T-cell (primary cell): ENCODE measurements at regions of chr1 and their contacts with region 1.

Region 1: DNA sequence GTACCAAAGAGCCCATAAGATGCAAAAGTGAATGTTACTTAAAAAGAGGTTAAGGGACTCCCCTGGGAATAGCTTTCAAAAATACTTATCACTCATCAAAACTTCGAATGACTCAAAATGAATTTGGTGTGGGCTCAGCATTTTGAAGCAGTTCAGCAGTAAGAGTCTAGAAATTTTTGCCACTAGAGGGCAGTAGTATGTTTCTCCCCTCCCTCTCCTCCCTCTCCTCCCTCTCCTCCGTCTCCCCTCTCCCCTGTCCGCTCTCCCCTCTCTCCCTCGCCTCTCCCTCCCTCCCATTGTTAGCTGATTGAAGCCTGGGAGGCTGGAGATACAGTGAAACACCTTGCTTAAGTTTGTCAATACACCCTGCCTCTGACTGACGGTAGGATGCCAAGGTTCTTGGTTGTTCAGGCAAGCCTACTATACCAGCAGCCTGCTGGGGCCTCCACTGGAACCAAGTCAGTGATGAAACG is 70.8 kb upstream of the TENT5C start:
- DNase-seq: peak in 27 of 35 experiments; percentile 0 to 80 (median 23)
- ATAC-seq: peak; percentile 73 to 86 (median 77)
- H3K4me3 ChIP-seq: no peak overlapping the region
- H3K4me3 Mint-ChIP-seq: no peak overlapping the region
- H3K27ac ChIP-seq: no peak overlapping the region
- H3K27ac Mint-ChIP-seq: peak overlapping the region; percentile 24 to 46
- H3K4me1 ChIP-seq: peaks cover 2 to 10% of the 10 kb centered on the region in 2 experiments
- H3K4me1 Mint-ChIP-seq: peaks cover 0 to 2% (median 0%) of the 10 kb centered on the region in 3 donors
- H3K27me3 ChIP-seq: no peaks in the 10 kb centered on the region
- H3K27me3 Mint-ChIP-seq: no peaks in the 10 kb centered on the region

Region 2: GRCh38 chr1:117473063-117473462 is 62.0 kb before region 1 on chr1:
- CTCF ChIA-PET with region 1: no interaction called
- POLR2A ChIA-PET with region 1: no interaction called
- DNase-seq: no peak
- ATAC-seq: no peak
- H3K4me3 ChIP-seq: no peak overlapping the region
- H3K4me3 Mint-ChIP-seq: no peak overlapping the region
- H3K27ac ChIP-seq: no peak overlapping the region
- H3K27ac Mint-ChIP-seq: no peak overlapping the region
- H3K4me1 ChIP-seq: no peaks in the 10 kb centered on the region
- H3K4me1 Mint-ChIP-seq: no peaks in the 10 kb centered on the region
- H3K27me3 ChIP-seq: no peaks in the 10 kb centered on the region
- H3K27me3 Mint-ChIP-seq: no peaks in the 10 kb centered on the region

Region 3: GRCh38 chr1:117579221-117579906 is 44.3 kb after region 1 on chr1:
- CTCF ChIA-PET with region 1: interaction called in 1 of 2 experiments, 11 read pairs
- POLR2A ChIA-PET with region 1: interaction called in 1 of 2 experiments, 3 read pairs
- DNase-seq: no peak
- ATAC-seq: no peak
- H3K4me3 ChIP-seq: no peak overlapping the region
- H3K4me3 Mint-ChIP-seq: no peak overlapping the region
- H3K27ac ChIP-seq: no peak overlapping the region
- H3K27ac Mint-ChIP-seq: no peak overlapping the region
- H3K4me1 ChIP-seq: no peaks in the 10 kb centered on the region
- H3K4me1 Mint-ChIP-seq: peaks cover 0 to 7% (median 0%) of the 10 kb centered on the region in 3 donors
- H3K27me3 ChIP-seq: peaks cover 0 to 7% of the 10 kb centered on the region in 2 experiments
- H3K27me3 Mint-ChIP-seq: no peaks in the 10 kb centered on the region

Region 4: DNA sequence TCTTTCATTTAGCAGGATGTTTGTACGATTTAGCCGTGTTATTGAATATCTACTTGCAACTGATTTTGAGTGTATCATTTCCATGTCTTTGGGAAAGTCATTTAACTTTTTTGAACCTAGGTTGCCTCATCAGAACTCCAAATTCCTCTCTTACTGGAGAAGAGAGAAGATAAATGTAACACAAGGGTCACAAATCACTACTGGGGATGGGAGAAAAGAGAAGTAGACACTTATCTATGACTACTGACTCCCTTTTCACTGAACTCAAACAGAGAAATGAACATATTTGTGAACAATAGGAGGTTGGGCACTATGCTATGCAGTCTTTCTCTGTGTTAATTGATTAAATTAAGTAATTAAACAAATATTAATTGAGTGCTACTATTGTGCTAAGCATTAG is 113.0 kb after region 1 on chr1:
- CTCF ChIA-PET with region 1: interaction called in 1 of 2 experiments, 12 read pairs
- POLR2A ChIA-PET with region 1: no interaction called
- DNase-seq: no peak
- ATAC-seq: no peak
- H3K4me3 ChIP-seq: no peak overlapping the region
- H3K4me3 Mint-ChIP-seq: no peak overlapping the region
- H3K27ac ChIP-seq: no peak overlapping the region
- H3K27ac Mint-ChIP-seq: no peak overlapping the region
- H3K4me1 ChIP-seq: peaks cover 3 to 52% of the 10 kb centered on the region in 2 experiments
- H3K4me1 Mint-ChIP-seq: peaks cover 28 to 59% (median 50%) of the 10 kb centered on the region in 3 donors
- H3K27me3 ChIP-seq: peaks cover 0 to 16% of the 10 kb centered on the region in 2 experiments
- H3K27me3 Mint-ChIP-seq: peaks cover 6 to 29% of the 10 kb centered on the region in 2 donors

Region 5: DNA sequence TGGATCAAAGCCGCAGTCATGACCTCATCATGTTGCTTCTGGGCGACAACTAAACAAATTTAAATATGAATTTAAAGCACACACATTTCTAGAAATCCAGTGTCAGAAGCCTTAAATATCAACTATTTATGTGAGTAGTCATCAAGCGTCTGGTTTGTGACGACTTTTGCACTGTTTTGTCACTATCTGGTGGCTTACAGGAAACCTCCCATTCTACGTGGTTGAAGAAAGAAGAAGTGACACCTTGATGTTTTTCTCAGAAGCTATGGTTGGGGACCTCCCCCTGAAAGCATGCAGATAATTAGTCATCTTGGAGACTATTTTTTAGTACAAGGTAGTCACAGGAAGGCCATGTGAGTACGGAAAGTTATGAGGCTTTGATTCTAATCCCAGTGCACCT is 129.3 kb after region 1 on chr1:
- CTCF ChIA-PET with region 1: interaction called, 5 to 16 read pairs
- POLR2A ChIA-PET with region 1: no interaction called
- DNase-seq: peak in 33 of 35 experiments; percentile 30 to 91 (median 65)
- ATAC-seq: peak; percentile 84 to 92 (median 92)
- H3K4me3 ChIP-seq: no peak overlapping the region
- H3K4me3 Mint-ChIP-seq: peak overlapping the region in 1 of 3 donors; percentile 42
- H3K27ac ChIP-seq: peak overlapping the region; percentile 93
- H3K27ac Mint-ChIP-seq: peak overlapping the region; percentile 90 to 92
- H3K4me1 ChIP-seq: peaks cover 25 to 69% of the 10 kb centered on the region in 2 experiments
- H3K4me1 Mint-ChIP-seq: peaks cover 66 to 84% (median 79%) of the 10 kb centered on the region in 3 donors
- H3K27me3 ChIP-seq: peaks cover 0 to 5% of the 10 kb centered on the region in 2 experiments
- H3K27me3 Mint-ChIP-seq: peaks cover 0 to 4% of the 10 kb centered on the region in 2 donors

Region 6: DNA sequence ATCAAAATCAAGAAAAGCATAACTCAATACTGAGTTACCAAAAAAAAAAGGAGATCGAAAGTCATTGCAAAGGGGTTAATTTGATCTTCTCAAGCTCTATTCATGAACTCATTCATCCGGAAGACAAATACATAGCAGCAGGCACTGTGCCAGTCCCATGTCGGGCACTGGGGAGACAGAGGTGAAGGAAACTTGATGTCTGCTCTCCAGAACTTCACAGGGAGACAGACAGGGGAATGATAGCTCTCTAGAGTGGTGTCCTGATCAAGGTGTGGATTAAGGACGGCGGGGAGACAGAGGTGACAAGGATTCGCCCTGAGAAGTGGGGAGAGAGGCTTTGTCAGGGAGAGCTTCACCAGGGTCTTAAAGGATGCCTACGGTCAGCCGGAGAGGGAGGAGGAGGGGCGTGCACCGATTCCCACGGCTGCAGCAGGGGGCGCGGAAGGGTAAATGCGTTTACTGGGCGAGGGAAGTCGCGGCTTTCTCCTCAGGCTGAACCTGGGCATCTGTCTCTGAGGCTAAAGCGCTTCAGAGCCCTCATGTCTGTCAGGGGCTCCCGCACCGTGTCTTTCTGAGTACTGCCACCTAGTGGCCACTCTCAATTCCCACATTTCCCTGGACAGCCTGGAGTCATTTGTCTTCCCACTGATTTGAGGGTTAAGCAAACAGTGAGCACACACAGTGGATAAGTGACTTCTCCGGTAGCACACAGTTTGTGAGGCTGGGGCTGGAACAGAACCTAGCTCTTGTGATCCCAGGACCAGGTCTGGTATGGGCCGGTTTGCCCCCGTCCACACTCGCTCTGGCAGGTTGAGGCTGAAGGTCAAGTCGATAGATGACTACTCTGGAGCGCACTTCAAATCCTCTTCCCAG is 223.6 kb after region 1 on chr1:
- CTCF ChIA-PET with region 1: interaction called, 96 to 117 read pairs
- POLR2A ChIA-PET with region 1: no interaction called
- DNase-seq: peak; percentile 30 to 82 (median 52)
- ATAC-seq: peak; percentile 86 to 92 (median 88)
- H3K4me3 ChIP-seq: peak overlapping the region; percentile 5 to 49
- H3K4me3 Mint-ChIP-seq: peak overlapping the region; percentile 74 to 79 (median 75)
- H3K27ac ChIP-seq: no peak overlapping the region
- H3K27ac Mint-ChIP-seq: no peak overlapping the region
- H3K4me1 ChIP-seq: peaks cover 0 to 15% of the 10 kb centered on the region in 2 experiments
- H3K4me1 Mint-ChIP-seq: peaks cover 9 to 11% (median 11%) of the 10 kb centered on the region in 3 donors
- H3K27me3 ChIP-seq: peaks cover 2 to 17% of the 10 kb centered on the region in 2 experiments
- H3K27me3 Mint-ChIP-seq: peaks cover 8 to 19% of the 10 kb centered on the region in 2 donors

Region 7: GRCh38 chr1:117895482-117896114 is 360.6 kb after region 1 on chr1:
- CTCF ChIA-PET with region 1: interaction called, 4 to 13 read pairs
- POLR2A ChIA-PET with region 1: no interaction called
- DNase-seq: peak in 31 of 35 experiments; percentile 7 to 72 (median 44)
- ATAC-seq: peak in 1 of 4 experiments; percentile 48
- H3K4me3 ChIP-seq: no peak overlapping the region
- H3K4me3 Mint-ChIP-seq: no peak overlapping the region
- H3K27ac ChIP-seq: no peak overlapping the region
- H3K27ac Mint-ChIP-seq: no peak overlapping the region
- H3K4me1 ChIP-seq: no peaks in the 10 kb centered on the region
- H3K4me1 Mint-ChIP-seq: peaks cover 2 to 5% (median 2%) of the 10 kb centered on the region in 3 donors
- H3K27me3 ChIP-seq: no peaks in the 10 kb centered on the region
- H3K27me3 Mint-ChIP-seq: no peaks in the 10 kb centered on the region